ENCODE measurements at regions of chr18 and their contacts with region 1.

Region 1: DNA sequence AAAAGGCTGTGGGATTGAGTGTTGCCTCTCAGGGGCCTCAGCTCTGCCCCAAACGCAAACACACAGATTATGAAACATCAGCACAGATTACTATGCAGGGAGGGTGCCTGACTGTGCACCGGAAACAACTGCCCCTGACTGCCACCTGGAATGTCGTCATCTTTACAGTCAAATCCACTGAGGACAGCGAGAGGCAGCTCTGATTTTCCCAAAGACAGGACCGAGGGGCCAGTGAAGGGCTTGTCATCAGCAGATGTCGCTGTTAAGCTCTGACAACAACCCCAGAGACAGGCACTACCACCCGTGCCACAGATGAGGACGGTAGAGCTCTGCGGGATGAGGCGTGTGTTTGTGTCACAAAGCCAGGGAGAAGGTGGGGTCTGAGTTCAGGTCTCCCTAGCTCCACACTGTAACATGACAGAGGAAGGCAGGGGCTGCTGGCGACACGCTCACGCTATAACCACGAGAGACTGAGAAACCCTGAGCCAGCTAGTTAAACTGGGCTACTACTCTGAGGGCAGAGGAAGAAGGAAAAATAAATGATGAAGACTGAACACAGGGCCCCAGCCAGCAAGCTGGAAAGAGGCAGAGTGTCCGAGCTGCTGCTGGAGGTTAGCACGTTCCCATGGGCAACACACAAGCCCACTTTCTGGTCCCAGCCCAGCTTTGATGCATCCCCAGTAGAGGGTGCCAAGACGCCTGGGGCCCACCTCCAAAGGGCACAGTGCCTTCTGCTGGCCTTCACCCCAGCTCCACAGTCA is 47.0 kb downstream of the PARD6G start:
- DNase-seq: peak; percentile 11
- CTCF ChIP-seq: peak; percentile 2

Region 2: GRCh38 chr18:80210312-80211083 is 10.1 kb after region 1 on chr18:
- CTCF ChIA-PET with region 1: interaction called, 14 read pairs
- POLR2A ChIA-PET with region 1: no interaction called
- DNase-seq: peak; percentile 26
- CTCF ChIP-seq: no peak

Region 3: GRCh38 chr18:80253871-80254492 is 53.6 kb after region 1 on chr18:
- CTCF ChIA-PET with region 1: interaction called, 11 read pairs
- POLR2A ChIA-PET with region 1: no interaction called
- DNase-seq: no peak
- CTCF ChIP-seq: no peak